Right ventricle myocardium inferior (tissue), 1 donor: ENCODE measurements at regions of chr16 and their contacts with region 1.

Region 1: DNA sequence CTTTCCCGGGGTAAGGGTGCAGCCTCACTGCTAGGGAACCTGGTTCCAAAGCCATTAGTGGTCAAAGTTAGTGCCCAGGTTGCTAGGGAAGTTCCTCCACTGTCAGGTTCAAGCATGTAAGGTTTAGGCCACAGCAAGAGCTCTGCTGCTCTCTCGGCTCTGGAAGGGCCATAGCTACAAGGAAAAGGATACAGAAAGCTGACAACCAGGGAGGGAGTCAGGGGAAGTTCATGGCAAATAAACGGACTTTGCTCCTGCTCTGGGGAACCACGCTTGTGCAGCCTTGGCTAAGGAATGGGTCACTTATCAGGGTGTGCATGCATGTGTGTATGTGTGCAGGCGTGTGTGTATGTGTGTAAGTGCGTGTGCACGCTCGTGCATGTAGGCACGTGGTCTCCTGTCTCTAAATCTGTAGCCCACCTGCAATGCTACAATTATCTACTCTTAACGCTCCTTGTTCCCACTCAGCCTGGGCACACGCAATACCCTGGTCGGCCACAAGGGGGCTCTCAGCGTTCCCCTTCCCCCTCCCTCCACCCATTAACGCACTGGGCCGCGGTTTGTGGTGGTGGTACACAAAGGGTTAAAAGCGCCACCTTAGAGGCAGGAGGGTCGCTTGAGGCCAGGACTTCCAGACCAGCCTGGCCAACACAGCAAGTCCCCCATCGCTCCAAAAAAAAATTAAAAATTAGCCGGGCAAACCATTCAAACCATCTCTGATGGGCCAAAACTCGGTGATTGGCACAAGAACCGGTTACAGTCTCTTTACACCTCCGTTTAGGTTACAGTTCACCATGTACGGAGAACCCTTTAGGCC is 48.4 kb upstream of the KDM8 start:
- DNase-seq: peak; percentile 77
- ATAC-seq: peak; percentile 63

Region 2: GRCh38 chr16:27268376-27269299 is 113.7 kb after region 1 on chr16 and contains the start of gene NSMCE1:
- intact Hi-C with region 1: no loop called
- DNase-seq: peak; percentile 99
- ATAC-seq: peak; percentile 99
- total RNA-seq, gene NSMCE1: 35.8 TPM

Region 3: DNA sequence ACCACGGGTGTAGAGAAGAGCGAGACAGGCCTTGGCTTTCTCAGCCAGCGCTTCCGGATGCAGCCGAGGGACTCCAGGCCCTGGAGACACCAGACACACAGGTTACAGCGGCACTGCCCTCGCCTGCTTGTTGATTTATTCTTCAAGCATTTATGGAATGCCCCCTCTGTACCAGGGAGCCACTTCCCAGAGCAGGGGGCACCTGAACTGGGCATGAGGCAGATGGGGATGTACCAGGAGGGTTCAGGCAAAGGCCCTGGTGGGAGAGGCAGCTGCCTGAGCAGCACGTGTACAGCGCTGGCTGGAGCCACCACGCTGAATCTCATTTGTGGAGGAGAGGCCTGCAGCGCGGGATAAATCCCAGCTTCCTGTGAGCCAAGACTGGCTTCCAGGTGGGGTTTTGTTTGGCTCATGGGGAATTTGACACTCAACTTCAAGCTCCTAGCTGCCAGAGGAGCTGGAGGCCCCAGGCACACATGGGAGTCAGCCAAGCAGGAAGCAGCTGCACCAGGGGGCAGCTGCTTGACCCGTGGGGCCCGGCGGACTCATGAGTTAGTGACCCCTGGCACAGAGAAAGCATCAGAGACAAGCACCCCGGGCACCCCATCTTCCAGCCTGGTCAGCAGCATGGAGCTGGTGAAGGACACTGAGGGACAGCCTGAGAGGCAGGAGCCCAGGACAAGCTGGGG is 306.7 kb after region 1 on chr16:
- intact Hi-C with region 1: loop called (anchors 1 kb)
- DNase-seq: no peak
- ATAC-seq: no peak